GM12878 (cell line): ENCODE measurements at regions of chr2 and their contacts with region 1.

Region 1: GRCh38 chr2:207974216-207974605 is 51.1 kb downstream of the PLEKHM3 start:
- DNase-seq: no peak
- ATAC-seq: no peak
- H3K4me3 ChIP-seq: no peak overlapping the region
- H3K27ac ChIP-seq: no peak overlapping the region
- H3K4me1 ChIP-seq: 0 out of 2 replicates have a peak, but pooled peaks cover 3% of the 10 kb centered on the region
- H3K27me3 ChIP-seq: no peaks in the 10 kb centered on the region
- CTCF ChIP-seq: no peak
- EP300 ChIP-seq: no peak
- POLR2A ChIP-seq: no peak
- RAD21 ChIP-seq: no peak

Region 2: GRCh38 chr2:207692206-207693065 is 281.8 kb before region 1 on chr2:
- CTCF ChIA-PET with region 1: interaction called, 15 read pairs
- POLR2A ChIA-PET with region 1: interaction called, 5 read pairs
- RAD21 ChIA-PET with region 1: no interaction called
- SMC1A ChIA-PET with region 1: interaction called, 4 read pairs
- in situ Hi-C with region 1: no loop called
- intact Hi-C with region 1: no loop called
- DNase-seq: no peak
- ATAC-seq: peak; percentile 85
- H3K4me3 ChIP-seq: no peak overlapping the region
- H3K27ac ChIP-seq: no peak overlapping the region
- H3K4me1 ChIP-seq: no peaks in the 10 kb centered on the region
- H3K27me3 ChIP-seq: no peaks in the 10 kb centered on the region
- CTCF ChIP-seq: peak; percentile 40 to 63 (median 60)
- EP300 ChIP-seq: no peak
- POLR2A ChIP-seq: no peak
- RAD21 ChIP-seq: peak; percentile 51

Region 3: DNA sequence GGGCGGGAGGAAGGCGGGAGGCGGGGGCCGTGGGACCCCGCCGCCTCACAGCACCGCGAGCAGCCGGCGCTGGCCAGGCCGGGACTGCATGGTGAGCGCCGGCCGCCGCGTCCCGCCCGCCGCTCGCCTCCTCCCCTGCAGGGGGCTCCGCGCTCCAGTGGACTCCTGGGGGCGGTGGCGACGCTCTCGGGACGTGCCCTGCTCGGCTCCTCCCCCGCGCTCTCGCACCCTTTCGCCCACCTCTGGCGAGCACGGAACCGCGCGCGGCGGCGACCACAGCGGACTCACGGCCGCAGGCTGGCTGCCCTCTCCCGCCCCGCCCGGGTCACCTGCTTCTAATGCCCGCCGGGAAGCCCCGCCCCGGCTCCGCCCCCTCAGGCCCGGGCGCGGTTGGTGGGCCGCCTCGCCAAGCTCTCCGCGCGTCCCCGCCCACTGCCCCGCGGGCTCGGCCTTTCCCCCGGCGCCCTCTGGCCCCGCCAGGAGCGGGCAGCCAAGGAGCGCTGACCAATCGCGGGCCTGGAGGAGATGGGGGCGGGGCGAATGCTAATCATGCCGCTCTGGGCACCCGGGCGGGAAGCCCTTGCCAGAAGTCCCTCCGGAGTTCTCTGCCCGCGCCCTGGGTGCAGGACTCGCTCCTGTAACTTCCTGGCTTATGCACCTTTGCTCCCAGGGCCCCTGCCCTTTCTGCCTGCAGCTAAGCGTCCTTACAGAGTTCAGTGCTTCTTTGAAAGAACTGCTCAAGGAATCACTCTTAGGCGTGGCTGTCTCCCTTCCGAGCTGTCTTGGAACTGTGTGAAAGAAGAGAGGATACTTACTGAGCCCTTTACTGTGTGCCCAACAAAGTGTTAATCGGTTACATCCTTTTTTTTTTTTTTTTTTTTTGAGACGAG is 204.4 kb before region 1 on chr2 and contains the start of gene FZD5:
- CTCF ChIA-PET with region 1: interaction called, 56 read pairs
- POLR2A ChIA-PET with region 1: interaction called, 5 read pairs
- RAD21 ChIA-PET with region 1: interaction called, 12 read pairs
- SMC1A ChIA-PET with region 1: interaction called, 25 read pairs
- in situ Hi-C with region 1: no loop called
- intact Hi-C with region 1: loop called (anchors 1 kb)
- DNase-seq: peak; percentile 68
- ATAC-seq: peak; percentile 92
- H3K4me3 ChIP-seq: peak within 1 kb of the TSS; percentile 87
- H3K27ac ChIP-seq: no peak within 1 kb of the TSS
- H3K4me1 ChIP-seq: peaks cover 17% of the 10 kb centered on the region
- H3K27me3 ChIP-seq: no peaks in the 10 kb centered on the region; a peak in 2 of 4 replicates
- CTCF ChIP-seq: peak; percentile 16 to 46 (median 44); a peak in 3 of 6 replicates
- EP300 ChIP-seq: 0 out of 4 replicates have a peak, but pooled peaks of 1 of the 2 experiments have one; percentile 35
- POLR2A ChIP-seq: peak; percentile 59
- RAD21 ChIP-seq: peak; percentile 28; the same call in 1 of the 2 replicates
- polyA plus RNA-seq, gene FZD5: 0.40 to 0.53 TPM

Region 4: DNA sequence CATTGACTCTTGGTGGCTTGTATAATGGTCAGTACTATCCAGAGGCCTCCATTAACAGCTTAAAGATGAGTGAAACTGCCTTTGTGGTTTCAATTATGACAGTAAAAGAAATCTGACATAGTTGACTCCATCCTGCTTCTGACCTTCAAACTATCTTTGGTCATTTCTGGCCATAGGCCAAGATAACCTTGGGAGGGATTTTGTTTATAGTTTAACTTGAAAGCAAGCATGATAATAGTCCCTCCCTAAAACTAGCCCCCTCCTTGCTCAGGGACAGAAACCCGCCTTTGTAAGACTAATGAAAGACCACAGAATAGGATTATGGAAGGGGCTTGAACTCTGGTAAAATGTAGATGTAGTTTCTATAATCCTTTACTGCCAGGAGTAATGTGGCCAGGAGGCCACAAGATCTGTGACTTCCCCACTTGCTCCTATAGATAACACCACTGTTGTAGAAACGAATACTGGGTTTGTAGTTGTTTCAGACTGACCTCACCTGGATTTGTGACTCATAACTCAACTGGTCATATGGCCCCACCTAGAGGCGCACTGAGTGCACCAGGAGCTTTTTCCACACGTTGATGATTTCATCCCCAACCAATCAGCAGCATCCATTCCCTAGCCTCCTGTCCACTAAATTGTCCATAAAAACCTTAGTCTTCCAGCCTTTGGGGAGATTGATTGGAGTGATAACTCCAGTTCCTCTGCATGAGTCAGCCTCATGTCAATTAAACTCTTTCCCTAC is 59.7 kb after region 1 on chr2:
- CTCF ChIA-PET with region 1: interaction called, 23 read pairs
- POLR2A ChIA-PET with region 1: no interaction called
- RAD21 ChIA-PET with region 1: interaction called, 5 read pairs
- SMC1A ChIA-PET with region 1: interaction called, 4 read pairs
- in situ Hi-C with region 1: no loop called
- intact Hi-C with region 1: no loop called
- DNase-seq: no peak
- ATAC-seq: peak; percentile 92
- H3K4me3 ChIP-seq: no peak overlapping the region
- H3K27ac ChIP-seq: no peak overlapping the region
- H3K4me1 ChIP-seq: peaks cover 8% of the 10 kb centered on the region
- H3K27me3 ChIP-seq: no peaks in the 10 kb centered on the region
- CTCF ChIP-seq: peak; percentile 54 to 74 (median 69); a peak in 5 of 6 replicates
- EP300 ChIP-seq: 0 out of 4 replicates have a peak, but pooled peaks of 1 of the 2 experiments have one; percentile 24
- POLR2A ChIP-seq: no peak
- RAD21 ChIP-seq: peak; percentile 81

Region 5: DNA sequence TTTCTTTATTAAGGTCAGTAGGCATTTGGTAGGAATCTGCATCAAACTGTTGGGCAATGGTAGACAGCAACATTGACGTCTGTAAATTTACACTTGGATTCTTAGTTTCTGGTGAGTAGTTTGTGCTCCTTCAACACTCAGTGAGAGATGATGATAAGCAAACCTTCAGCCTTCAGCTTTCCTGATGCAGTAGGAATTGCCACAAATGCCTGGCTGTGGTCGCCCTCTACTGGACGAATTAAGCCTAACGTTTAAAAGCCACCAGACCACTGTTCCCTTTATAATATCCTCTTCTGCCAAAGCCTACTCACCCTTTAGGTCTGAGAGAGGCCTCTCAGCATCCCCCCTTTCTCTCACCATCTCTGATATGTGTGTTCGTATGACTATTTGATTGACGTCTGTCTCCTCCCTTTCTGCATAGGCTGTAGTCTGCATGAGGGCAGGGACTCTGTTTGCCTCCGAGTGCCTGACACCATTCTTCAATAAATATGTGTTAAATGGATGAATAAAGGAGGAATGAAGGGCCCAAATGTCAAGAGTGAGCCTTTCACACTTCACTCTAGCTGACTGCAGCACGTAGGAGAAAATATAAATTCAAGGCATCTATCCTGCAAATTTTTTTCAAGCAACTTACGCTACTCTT is 98.2 kb after region 1 on chr2:
- CTCF ChIA-PET with region 1: interaction called, 31 read pairs
- POLR2A ChIA-PET with region 1: no interaction called
- RAD21 ChIA-PET with region 1: interaction called, 4 read pairs
- SMC1A ChIA-PET with region 1: interaction called, 3 read pairs
- in situ Hi-C with region 1: no loop called
- intact Hi-C with region 1: no loop called
- DNase-seq: peak; percentile 19
- ATAC-seq: peak; percentile 97
- H3K4me3 ChIP-seq: no peak overlapping the region
- H3K27ac ChIP-seq: no peak overlapping the region
- H3K4me1 ChIP-seq: no peaks in the 10 kb centered on the region
- H3K27me3 ChIP-seq: no peaks in the 10 kb centered on the region
- CTCF ChIP-seq: peak; percentile 79 to 83 (median 80)
- EP300 ChIP-seq: no peak
- POLR2A ChIP-seq: no peak
- RAD21 ChIP-seq: peak; percentile 92